Activated CD8-positive, alpha-beta T cell treated with anti-CD3 and anti-CD28 coated beads, Interleukin-2, amount 10 ng/mL, durations not matched to agents 7 days and 5 days (primary cell): ENCODE measurements at regions of chr6 and their contacts with region 1.

Region 1: DNA sequence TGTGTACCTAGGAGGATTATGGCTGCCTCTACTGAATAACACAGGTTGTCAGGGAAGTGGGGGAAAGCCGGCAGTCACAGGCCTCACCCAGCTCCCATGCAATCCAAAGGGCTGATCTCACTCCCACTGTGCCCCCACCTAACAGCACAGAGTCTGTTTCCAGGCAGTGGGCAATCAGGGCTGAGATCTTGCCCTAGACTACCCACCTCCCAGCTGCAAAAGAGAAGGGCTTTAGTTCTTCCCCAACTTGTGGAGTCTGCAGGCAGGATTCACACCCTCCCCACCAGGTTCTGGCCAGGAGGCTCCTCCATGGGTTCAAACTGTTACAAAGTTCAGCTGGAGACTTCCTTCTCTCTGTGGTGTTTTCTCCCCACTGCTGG is 66.0 kb upstream of the OLIG3 start:
- DNase-seq: no peak
- ATAC-seq: no peak
- H3K4me3 Mint-ChIP-seq: no peak overlapping the region
- H3K27ac Mint-ChIP-seq: peak overlapping the region; percentile 58
- H3K4me1 Mint-ChIP-seq: peaks cover 35% of the 10 kb centered on the region
- H3K27me3 Mint-ChIP-seq: no peaks in the 10 kb centered on the region

Region 2: GRCh38 chr6:137536104-137536773 is 23.9 kb before region 1 on chr6:
- CTCF ChIA-PET with region 1: interaction called, 12 read pairs
- POLR2A ChIA-PET with region 1: no interaction called
- DNase-seq: peak; percentile 50
- ATAC-seq: peak; percentile 80
- H3K4me3 Mint-ChIP-seq: no peak overlapping the region
- H3K27ac Mint-ChIP-seq: no peak overlapping the region
- H3K4me1 Mint-ChIP-seq: no peaks in the 10 kb centered on the region
- H3K27me3 Mint-ChIP-seq: peaks cover 13% of the 10 kb centered on the region

Region 3: GRCh38 chr6:137570393-137570792 is 10.2 kb after region 1 on chr6:
- CTCF ChIA-PET with region 1: interaction called, 18 read pairs
- POLR2A ChIA-PET with region 1: no interaction called
- DNase-seq: no peak
- ATAC-seq: no peak
- H3K4me3 Mint-ChIP-seq: no peak overlapping the region
- H3K27ac Mint-ChIP-seq: no peak overlapping the region
- H3K4me1 Mint-ChIP-seq: peaks cover 4% of the 10 kb centered on the region
- H3K27me3 Mint-ChIP-seq: peaks cover 39% of the 10 kb centered on the region